Activated CD4-positive, alpha-beta memory T cell treated with anti-CD3 and anti-CD28 coated beads, Interleukin-2, amount 10 ng/mL, durations not matched to agents 7 days and 5 days (primary cell): ENCODE measurements at regions of chr9 and their contacts with region 1.

Region 1: GRCh38 chr9:83636813-83637212 is 13.9 kb downstream of the IDNK start:
- DNase-seq: no peak
- H3K4me3 Mint-ChIP-seq: no peak overlapping the region
- H3K27ac Mint-ChIP-seq: no peak overlapping the region
- H3K4me1 Mint-ChIP-seq: no peaks in the 10 kb centered on the region
- H3K27me3 Mint-ChIP-seq: no peaks in the 10 kb centered on the region

Region 2: GRCh38 chr9:83649080-83649479 is 12.3 kb after region 1 on chr9:
- CTCF ChIA-PET with region 1: interaction called, 22 read pairs
- POLR2A ChIA-PET with region 1: no interaction called
- DNase-seq: peak; percentile 75
- H3K4me3 Mint-ChIP-seq: no peak overlapping the region
- H3K27ac Mint-ChIP-seq: no peak overlapping the region
- H3K4me1 Mint-ChIP-seq: peaks cover 5% of the 10 kb centered on the region
- H3K27me3 Mint-ChIP-seq: no peaks in the 10 kb centered on the region